Activated CD4-positive, alpha-beta T cell treated with anti-CD3 and anti-CD28 coated beads for 36 hours (primary cell): ENCODE measurements at regions of chr1 and their contacts with region 1.

Region 1: DNA sequence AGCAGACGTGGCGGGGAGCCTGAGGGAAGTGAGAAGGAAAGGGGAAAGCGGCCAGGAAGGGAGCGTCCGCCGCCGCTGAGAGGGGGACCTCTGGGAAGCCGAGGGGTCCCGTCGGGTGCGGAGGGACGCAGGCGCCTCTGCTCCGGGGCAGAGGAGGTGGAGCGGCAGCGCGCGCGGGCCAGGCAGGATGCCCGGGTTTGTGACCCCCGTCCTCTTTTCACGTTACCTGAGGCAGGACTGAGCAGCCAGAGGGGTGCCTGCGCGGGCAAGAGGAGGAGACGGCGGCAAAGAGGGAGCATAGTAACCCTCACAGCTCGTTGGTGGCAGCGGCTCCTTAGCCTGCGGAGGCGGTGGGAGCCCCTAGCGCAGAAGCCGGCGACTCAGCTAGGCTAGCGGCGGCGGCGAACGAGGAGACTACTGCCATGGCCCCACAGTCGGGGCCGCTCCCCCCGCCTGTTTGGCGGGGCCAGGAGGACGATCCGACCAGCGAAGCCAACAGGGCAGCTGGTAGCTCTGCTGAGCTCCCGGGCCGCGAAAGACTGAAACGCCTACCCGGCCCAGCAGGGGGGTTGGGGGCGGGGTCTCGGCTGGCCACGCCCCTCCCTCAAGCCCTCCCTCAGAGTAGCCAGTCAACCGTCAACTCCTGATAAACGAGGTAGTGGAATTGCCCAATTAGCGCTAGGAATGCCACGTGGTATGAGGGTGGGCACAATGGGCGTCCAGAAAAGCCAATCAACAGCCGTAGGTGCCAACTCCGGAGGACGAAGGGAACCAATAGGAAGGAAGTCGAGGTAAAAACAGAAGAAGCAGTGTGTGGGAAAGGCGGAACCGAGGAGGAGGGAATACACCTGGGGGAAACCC is at the start of gene TESK2:
- DNase-seq: peak; percentile 97
- ATAC-seq: peak; percentile 94
- H3K4me3 Mint-ChIP-seq: no peak within 1 kb of the TSS
- H3K27ac Mint-ChIP-seq: no peak within 1 kb of the TSS
- H3K4me1 Mint-ChIP-seq: peaks cover 4% of the 10 kb centered on the region
- H3K27me3 Mint-ChIP-seq: no peaks in the 10 kb centered on the region
- total RNA-seq, gene TESK2: 3.1 to 3.3 TPM

Region 2: GRCh38 chr1:43974443-43975248 is 1516.2 kb before region 1 on chr1 and contains the start of gene ATP6V0B:
- CTCF ChIA-PET with region 1: no interaction called
- POLR2A ChIA-PET with region 1: no interaction called
- intact Hi-C with region 1: loop called in 1 of 2 experiments (anchors 5 kb)
- DNase-seq: peak; percentile 99
- ATAC-seq: peak; percentile 76
- H3K4me3 Mint-ChIP-seq: peak within 1 kb of the TSS; percentile 81
- H3K27ac Mint-ChIP-seq: peak within 1 kb of the TSS; percentile 88
- H3K4me1 Mint-ChIP-seq: peaks cover 48% of the 10 kb centered on the region
- H3K27me3 Mint-ChIP-seq: no peaks in the 10 kb centered on the region
- total RNA-seq, gene ATP6V0B: 39.4 to 75.6 TPM

Region 3: GRCh38 chr1:44775078-44775929 is 715.6 kb before region 1 on chr1 and contains the start of gene RPS8:
- CTCF ChIA-PET with region 1: no interaction called
- POLR2A ChIA-PET with region 1: no interaction called
- intact Hi-C with region 1: loop called in 1 of 2 experiments (anchors 5 kb)
- DNase-seq: peak; percentile 94
- ATAC-seq: peak; percentile 84
- H3K4me3 Mint-ChIP-seq: peak within 1 kb of the TSS; percentile 96
- H3K27ac Mint-ChIP-seq: peak within 1 kb of the TSS; percentile 100
- H3K4me1 Mint-ChIP-seq: peaks cover 33% of the 10 kb centered on the region
- H3K27me3 Mint-ChIP-seq: no peaks in the 10 kb centered on the region
- total RNA-seq, gene RPS8: 3,005 to 3,275 TPM

Region 4: DNA sequence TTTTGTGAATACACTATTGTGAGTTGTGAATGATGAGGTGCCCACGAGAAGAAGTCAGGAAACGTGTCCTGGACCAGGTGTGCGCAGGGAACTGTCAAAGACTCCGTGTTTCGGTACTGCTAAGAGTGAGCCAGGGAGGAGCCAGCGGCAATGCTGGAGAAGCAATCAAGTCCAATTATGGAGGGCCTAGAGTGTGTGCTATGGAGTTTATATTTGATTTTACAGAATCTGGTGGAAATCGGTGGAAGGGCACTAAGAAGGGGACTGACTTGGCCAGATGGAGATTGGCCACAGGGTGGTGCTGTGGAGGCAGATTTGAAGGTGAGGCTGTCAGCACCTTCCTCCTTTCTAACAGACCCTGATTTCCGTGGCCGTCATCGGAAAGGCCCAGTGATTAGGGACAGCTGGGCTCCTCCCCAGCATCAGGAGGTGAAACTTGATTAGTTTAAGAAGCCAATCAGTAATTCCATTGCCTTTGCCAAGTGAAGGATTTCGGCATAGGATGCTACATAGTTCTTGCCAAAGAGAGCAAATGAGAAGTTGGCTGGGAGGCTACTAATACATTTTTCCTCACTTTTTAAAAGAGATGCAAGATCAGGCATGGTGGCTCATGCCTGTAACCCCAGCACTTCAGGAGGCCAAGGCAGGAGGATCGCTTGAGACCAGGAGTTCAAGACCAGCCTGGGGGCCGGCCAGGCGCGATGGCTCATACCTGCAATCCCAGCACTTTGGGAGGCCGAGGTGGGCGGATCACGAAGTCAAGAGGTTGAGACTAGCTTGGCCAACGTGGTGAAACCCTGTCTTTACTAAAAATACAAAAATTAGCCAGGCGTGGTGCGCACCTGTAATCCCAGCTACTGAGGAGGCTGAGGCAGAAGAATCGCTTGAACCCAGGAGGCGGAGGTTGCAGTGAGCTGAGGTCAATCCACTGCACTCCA is 654.8 kb before region 1 on chr1:
- CTCF ChIA-PET with region 1: no interaction called
- POLR2A ChIA-PET with region 1: no interaction called
- intact Hi-C with region 1: loop called (anchors 1 to 5 kb)
- DNase-seq: peak; percentile 96
- ATAC-seq: peak; percentile 99
- H3K4me3 Mint-ChIP-seq: no peak overlapping the region
- H3K27ac Mint-ChIP-seq: no peak overlapping the region
- H3K4me1 Mint-ChIP-seq: peaks cover 3% of the 10 kb centered on the region
- H3K27me3 Mint-ChIP-seq: peaks cover 5% of the 10 kb centered on the region

Region 5: DNA sequence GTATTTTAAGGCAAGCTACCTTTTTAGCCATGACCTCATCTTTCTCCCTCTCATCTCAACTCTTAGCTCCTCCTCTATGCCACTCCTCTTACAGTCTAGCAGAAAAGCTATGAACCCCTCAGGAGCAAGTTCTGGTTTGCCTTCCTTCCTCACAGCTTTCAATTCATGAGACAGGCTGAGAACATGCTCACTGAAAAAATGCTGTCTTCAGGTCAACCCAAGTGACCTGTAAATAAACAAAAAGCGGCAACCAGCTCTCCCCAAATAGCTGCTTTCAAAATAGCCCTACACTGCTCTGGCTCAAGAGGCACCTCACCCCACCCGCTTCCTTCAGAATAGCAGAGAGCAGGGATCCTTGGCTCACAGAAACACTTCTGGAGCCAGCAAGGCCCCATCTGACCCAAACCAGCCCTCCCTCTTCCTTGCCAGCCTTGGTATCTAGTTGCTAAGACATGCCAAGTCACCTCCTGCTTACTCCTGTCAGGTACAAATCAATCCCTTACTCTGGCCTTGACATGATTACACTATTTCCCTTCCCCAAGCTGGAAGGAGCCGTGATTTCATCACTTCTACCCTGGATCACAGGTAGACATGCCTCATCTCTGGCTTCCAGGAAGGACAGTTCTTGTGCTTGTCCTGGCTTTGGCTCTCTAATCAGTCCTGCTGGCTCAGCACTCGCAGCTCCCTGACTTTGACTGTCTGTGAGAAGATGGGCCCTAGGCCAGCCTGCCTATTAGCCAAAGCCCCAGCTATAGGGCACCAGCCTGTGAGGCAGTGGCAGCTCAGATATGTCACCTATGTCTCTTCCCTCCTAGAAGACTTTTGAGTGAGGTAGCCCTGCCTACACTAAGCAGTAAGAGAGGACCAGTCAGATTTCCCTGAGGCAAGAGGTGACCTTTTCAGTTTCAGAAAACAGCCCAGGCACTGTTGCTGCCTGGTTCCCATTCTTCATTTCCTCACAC is 141.9 kb before region 1 on chr1:
- CTCF ChIA-PET with region 1: interaction called, 13 read pairs
- POLR2A ChIA-PET with region 1: interaction called, 3 read pairs
- intact Hi-C with region 1: no loop called
- DNase-seq: no peak
- ATAC-seq: peak; percentile 60
- H3K4me3 Mint-ChIP-seq: no peak overlapping the region
- H3K27ac Mint-ChIP-seq: peak overlapping the region; percentile 45
- H3K4me1 Mint-ChIP-seq: peaks cover 4% of the 10 kb centered on the region
- H3K27me3 Mint-ChIP-seq: no peaks in the 10 kb centered on the region

Region 6: GRCh38 chr1:45421935-45422334 is 68.9 kb before region 1 on chr1:
- CTCF ChIA-PET with region 1: no interaction called
- POLR2A ChIA-PET with region 1: no interaction called
- intact Hi-C with region 1: no loop called
- DNase-seq: no peak
- ATAC-seq: no peak
- H3K4me3 Mint-ChIP-seq: no peak overlapping the region
- H3K27ac Mint-ChIP-seq: no peak overlapping the region
- H3K4me1 Mint-ChIP-seq: no peaks in the 10 kb centered on the region
- H3K27me3 Mint-ChIP-seq: no peaks in the 10 kb centered on the region

Region 7: DNA sequence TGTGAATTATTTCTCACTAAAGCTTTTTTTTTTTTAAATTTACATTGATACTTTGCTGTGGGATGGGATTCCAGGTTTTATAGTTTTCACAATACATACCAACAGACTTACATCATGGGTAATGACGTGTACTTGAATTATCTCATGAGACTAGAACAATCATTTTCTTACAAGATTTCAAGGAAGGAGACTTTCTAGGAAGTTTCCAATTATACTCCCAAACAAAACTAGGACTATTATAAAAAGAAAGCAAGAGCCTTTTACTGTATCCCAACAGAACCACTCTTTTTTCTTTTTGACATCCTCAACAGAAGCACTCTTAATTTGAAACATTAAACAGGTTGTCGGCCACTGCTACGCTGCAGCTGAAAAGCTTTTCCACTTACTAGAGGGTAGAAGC is 48.6 kb before region 1 on chr1:
- CTCF ChIA-PET with region 1: no interaction called
- POLR2A ChIA-PET with region 1: no interaction called
- intact Hi-C with region 1: no loop called
- DNase-seq: no peak
- ATAC-seq: no peak
- H3K4me3 Mint-ChIP-seq: no peak overlapping the region
- H3K27ac Mint-ChIP-seq: no peak overlapping the region
- H3K4me1 Mint-ChIP-seq: peaks cover 4% of the 10 kb centered on the region
- H3K27me3 Mint-ChIP-seq: no peaks in the 10 kb centered on the region

Region 8: DNA sequence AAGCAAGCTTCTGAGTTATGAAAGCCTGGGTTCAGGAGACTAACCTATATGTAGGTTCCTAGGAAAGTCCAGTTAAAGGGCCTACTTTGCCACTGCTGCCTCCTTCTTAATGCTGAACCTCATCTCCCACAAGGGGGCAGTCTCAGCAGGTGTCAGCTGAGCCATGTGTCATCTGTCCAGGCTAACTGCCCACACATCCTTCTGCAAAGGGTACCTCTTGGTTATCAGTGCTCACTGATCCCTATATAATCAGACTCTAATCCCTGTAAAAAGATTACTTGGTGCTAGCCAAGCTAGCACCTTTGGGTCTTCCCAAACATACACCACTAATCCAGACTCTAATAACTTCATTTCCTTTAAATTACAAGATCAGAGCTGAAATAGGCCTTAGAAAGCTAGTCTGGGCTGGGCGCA is 21.8 kb after region 1 on chr1:
- CTCF ChIA-PET with region 1: interaction called, 11 read pairs
- POLR2A ChIA-PET with region 1: no interaction called
- intact Hi-C with region 1: no loop called
- DNase-seq: peak; percentile 77
- ATAC-seq: peak; percentile 85
- H3K4me3 Mint-ChIP-seq: no peak overlapping the region
- H3K27ac Mint-ChIP-seq: no peak overlapping the region
- H3K4me1 Mint-ChIP-seq: peaks cover 11% of the 10 kb centered on the region
- H3K27me3 Mint-ChIP-seq: no peaks in the 10 kb centered on the region

Region 9: GRCh38 chr1:45550401-45551351 is 59.8 kb after region 1 on chr1 and contains the start of gene AKR1A1:
- CTCF ChIA-PET with region 1: no interaction called
- POLR2A ChIA-PET with region 1: no interaction called
- intact Hi-C with region 1: loop called in 1 of 2 experiments (anchors 1 kb)
- DNase-seq: peak; percentile 95
- ATAC-seq: peak; percentile 94
- H3K4me3 Mint-ChIP-seq: peak within 1 kb of the TSS; percentile 94
- H3K27ac Mint-ChIP-seq: peak within 1 kb of the TSS; percentile 94
- H3K4me1 Mint-ChIP-seq: peaks cover 16% of the 10 kb centered on the region
- H3K27me3 Mint-ChIP-seq: no peaks in the 10 kb centered on the region
- total RNA-seq, gene AKR1A1: 140 to 181 TPM